HepG2 (cell line): ENCODE measurements at regions of chr14 and their contacts with region 1.

Region 1: GRCh38 chr14:22314181-22314820 is 274.7 kb downstream of the DAD1 start:
- DNase-seq: peak; percentile 82
- ATAC-seq: peak; percentile 97
- H3K4me3 ChIP-seq: no peak overlapping the region
- H3K27ac ChIP-seq: no peak overlapping the region
- H3K4me1 ChIP-seq: no peaks in the 10 kb centered on the region
- H3K27me3 ChIP-seq: no peaks in the 10 kb centered on the region; a peak in 1 of 5 replicates
- CTCF ChIP-seq: peak; percentile 88
- EP300 ChIP-seq: no peak
- POLR2A ChIP-seq: no peak
- RAD21 ChIP-seq: peak; percentile 70; the same call in 1 of the 2 replicates

Region 2: DNA sequence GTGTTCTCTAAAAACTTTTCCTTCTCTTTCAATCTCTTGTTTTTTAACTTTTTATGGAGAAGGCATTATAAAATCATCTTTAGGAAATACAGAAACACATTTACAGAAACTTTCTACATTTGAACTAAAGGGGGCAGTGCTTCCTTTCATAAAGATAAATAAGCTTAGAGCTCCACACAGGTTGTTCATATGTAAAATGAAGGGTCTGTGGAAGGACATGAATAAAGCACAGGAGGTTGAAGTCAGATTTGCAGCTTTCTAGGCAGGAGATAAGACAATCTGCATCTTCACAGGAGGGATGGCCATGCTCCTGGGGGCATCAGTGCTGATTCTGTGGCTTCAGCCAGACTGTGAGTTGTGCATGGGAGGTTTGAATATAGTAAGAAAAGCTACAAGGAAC is 151.2 kb before region 1 on chr14:
- CTCF ChIA-PET with region 1: no interaction called
- POLR2A ChIA-PET with region 1: no interaction called
- in situ Hi-C with region 1: no loop called
- intact Hi-C with region 1: loop called (anchors 10 kb)
- DNase-seq: peak; percentile 43
- ATAC-seq: peak; percentile 72
- H3K4me3 ChIP-seq: no peak overlapping the region
- H3K27ac ChIP-seq: no peak overlapping the region
- H3K4me1 ChIP-seq: no peaks in the 10 kb centered on the region
- H3K27me3 ChIP-seq: no peaks in the 10 kb centered on the region
- CTCF ChIP-seq: peak; percentile 57
- EP300 ChIP-seq: no peak
- POLR2A ChIP-seq: no peak
- RAD21 ChIP-seq: no peak

Region 3: DNA sequence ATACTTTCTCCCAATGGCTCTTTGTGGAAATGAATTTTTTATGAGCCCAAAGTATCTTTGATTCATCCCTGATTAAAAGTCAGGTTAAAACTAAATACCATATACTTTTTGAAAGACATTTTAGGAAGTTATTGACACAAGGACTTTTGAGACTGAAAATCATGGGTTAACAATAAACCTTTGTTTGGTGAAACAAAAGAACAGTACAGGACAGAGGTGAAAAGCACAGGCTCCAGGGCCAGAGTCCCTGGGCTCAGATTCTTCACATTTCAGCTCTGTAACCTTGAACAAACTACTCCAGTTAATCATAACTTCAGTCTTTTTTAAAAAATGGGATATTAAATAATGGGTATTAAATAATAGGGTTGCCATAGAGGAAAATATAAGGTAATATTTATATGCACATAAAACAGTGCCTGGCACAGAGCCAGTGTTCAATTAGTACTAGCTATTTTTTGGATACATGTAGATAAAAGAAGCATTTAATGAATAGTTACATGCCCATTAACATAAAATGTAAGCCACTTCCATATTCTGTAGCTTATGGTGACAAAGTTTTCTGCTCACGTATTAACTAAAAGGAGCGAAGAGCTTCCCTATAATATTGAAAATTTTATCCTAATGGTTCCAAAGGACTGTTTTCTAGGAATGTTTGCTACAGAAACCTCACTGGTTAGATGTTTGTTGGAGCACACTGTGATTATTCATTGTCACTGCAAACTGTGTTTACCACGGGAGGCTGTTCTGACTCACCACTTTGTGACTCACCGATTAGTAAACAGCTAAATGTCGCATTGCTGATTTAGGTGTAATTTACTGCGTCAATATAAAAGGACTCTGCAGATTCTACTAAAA is 19.3 kb after region 1 on chr14:
- CTCF ChIA-PET with region 1: interaction called, 5 read pairs
- POLR2A ChIA-PET with region 1: no interaction called
- in situ Hi-C with region 1: no loop called
- intact Hi-C with region 1: loop called (anchors 2 kb)
- DNase-seq: peak; percentile 91
- ATAC-seq: peak; percentile 86
- H3K4me3 ChIP-seq: peak overlapping the region in 2 of 3 experiments; percentile 5; a peak in 2 of 6 replicates
- H3K27ac ChIP-seq: peak overlapping the region; percentile 10
- H3K4me1 ChIP-seq: peaks cover 57% of the 10 kb centered on the region
- H3K27me3 ChIP-seq: peaks cover 0 to 3% of the 10 kb centered on the region in 2 experiments; a peak in 1 of 5 replicates
- CTCF ChIP-seq: no peak
- EP300 ChIP-seq: peak; percentile 58 to 95; a peak in 3 of 4 replicates
- POLR2A ChIP-seq: no peak
- RAD21 ChIP-seq: no peak

Region 4: DNA sequence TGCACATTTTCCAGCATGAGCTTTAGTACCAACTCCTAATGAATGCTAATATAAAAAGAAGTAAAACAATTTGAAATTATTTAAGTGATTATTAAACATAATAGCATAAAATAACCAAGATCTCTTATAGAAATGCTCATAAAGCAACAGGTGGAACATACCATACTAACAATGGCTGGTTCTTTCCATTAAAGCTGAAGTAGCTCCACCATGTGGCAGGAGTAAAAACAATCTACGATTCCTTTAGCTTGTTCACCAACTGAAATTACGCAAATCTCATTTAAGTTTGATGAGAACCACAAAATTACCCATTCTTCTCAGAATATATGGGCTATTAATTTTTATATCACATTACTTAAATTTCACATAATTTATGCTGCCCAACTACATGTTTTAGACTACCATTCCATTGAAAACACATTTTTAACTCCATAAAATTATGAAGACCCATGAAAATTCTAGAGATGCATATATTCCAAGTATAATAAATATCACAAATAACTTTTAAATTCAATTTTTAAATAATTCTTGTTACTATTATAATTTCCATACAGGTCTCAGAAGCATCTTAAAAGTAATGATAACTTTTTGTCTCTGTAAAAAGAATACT is 61.1 kb after region 1 on chr14:
- CTCF ChIA-PET with region 1: interaction called, 100 read pairs
- POLR2A ChIA-PET with region 1: interaction called, 5 read pairs
- in situ Hi-C with region 1: loop called (anchors 5 kb)
- intact Hi-C with region 1: loop called (anchors 1 kb)
- DNase-seq: peak; percentile 79
- ATAC-seq: peak; percentile 87
- H3K4me3 ChIP-seq: no peak overlapping the region
- H3K27ac ChIP-seq: no peak overlapping the region
- H3K4me1 ChIP-seq: no peaks in the 10 kb centered on the region
- H3K27me3 ChIP-seq: no peaks in the 10 kb centered on the region
- CTCF ChIP-seq: peak; percentile 87
- EP300 ChIP-seq: no peak
- POLR2A ChIP-seq: no peak
- RAD21 ChIP-seq: no peak; the same call in 1 of the 2 replicates

Region 5: DNA sequence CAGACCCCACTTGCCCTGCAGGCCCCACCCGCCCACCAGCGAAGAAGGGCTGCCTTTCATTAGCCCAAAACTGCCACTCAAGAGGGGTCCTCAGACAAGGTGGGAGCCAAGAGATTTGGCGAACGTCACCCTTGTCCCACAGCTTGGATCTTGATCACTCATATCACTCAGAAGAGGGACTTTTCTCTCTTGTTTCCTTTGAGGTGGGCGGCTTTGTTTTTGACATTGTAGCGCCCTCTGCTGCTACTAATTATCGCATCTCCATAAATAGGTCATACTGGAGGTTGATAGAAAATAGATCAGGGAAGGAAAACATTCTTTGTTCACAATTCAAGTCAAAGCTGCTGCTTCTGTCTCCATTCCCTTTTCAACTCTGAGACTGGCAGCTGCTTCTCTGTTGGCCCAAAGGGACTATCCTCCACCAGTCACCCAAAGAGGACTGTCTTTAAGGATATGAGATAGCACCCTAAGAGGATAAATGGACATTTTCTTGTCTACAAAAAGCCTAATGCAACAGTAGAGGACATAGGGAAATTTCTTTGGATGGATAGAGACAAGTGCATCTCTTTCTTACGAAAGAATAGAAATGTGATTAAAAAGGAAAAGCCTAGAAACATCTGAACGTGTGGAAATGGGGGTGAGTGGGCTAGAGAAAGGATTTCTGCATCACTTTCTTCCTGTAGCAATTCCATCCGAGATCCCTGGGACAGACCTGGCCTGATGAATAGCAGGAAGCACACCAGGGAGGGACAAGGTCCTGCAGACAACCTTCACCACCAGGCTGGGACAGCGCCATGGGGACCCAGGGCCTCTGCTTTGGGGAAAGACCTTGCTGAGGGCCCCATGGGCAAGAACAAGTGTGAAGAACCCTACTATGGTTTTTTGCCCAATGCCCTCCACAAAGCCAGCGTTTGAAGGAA is 158.9 kb after region 1 on chr14:
- CTCF ChIA-PET with region 1: interaction called, 6 read pairs
- POLR2A ChIA-PET with region 1: no interaction called
- in situ Hi-C with region 1: no loop called
- intact Hi-C with region 1: loop called (anchors 2 kb)
- DNase-seq: peak; percentile 56
- ATAC-seq: peak; percentile 65
- H3K4me3 ChIP-seq: no peak overlapping the region
- H3K27ac ChIP-seq: no peak overlapping the region
- H3K4me1 ChIP-seq: no peaks in the 10 kb centered on the region
- H3K27me3 ChIP-seq: peaks cover 0 to 4% of the 10 kb centered on the region in 2 experiments; a peak in 1 of 5 replicates
- CTCF ChIP-seq: peak; percentile 75
- EP300 ChIP-seq: no peak
- POLR2A ChIP-seq: no peak
- RAD21 ChIP-seq: peak; percentile 67